ENCODE measurements at regions of chr17 and their contacts with region 1.

Region 1: DNA sequence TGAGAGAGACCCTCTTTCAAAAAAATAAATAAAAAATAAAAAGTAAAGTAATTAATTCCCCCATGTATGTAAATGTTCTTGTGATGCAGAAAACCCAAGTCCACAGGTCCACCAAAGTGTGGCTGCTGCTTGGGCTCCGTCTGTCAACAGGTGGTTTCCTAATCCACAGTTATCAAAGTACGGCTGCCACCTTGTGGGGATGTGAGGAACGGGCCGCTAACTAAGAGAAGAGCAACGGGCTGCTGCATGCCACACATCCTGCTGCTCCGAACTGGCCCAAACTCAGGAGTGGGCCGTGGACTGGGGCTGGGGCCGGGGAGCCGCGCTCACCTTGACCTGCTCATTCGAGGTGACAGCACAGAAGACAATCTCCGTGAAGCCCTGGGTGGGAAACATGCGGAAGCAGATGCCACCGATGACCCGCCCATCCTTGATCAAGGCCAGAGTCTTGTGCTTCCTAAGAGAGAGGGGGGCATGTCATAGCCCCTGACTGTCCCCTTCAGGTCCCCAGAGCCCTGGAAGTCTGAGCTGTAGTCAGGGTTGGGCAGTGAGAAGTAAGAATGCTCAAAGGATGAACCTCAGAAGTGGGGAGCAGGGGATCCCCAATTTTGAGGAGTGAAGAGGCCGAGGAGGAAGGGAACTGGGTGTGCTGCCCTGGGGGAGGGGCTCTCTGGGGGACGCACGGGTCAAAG is 4.3 kb downstream of the KAT2A start:
- DNase-seq: peak; percentile 80
- H3K4me3 ChIP-seq: no peak overlapping the region
- H3K27ac ChIP-seq: no peak overlapping the region
- H3K4me1 ChIP-seq: peaks cover 48% of the 10 kb centered on the region
- H3K27me3 ChIP-seq: no peaks in the 10 kb centered on the region
- CTCF ChIP-seq: peak; percentile 87

Region 2: DNA sequence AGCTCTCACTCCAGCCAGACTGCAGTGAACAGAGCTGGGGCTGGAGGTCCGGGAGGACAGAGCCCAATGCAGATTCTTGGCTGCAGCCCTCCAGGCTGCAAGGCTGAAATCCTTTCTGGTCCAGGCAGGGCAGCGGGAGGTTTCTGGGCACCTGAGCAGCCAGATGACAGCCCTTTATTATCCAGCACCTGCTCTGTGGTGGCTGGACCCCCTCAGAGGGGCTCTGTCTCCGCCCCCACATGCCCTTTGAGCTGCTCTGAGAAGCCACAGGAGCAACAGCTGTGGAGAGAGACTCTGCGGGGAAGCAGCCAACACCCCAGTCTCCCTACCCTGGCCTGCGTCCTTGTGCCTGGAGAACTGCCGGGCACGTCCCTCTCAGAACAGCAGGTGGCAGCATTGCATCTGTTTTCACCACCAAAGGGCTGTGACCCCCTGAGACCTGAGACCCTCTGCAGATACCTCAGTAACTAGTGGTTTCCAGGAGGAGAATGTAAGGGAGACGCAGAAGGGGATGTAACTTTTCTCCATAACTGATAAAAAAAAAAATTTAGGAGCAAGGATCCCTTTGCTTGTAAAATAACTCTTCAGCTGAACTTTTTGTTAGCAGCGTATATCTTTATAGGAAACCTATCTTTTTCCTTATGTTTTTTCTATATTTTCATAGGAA is 153.9 kb before region 1 on chr17:
- intact Hi-C with region 1: loop called (anchors 5 kb)
- DNase-seq: peak; percentile 79
- H3K4me3 ChIP-seq: no peak overlapping the region
- H3K27ac ChIP-seq: no peak overlapping the region
- H3K4me1 ChIP-seq: peaks cover 30% of the 10 kb centered on the region
- H3K27me3 ChIP-seq: no peaks in the 10 kb centered on the region
- CTCF ChIP-seq: peak; percentile 93

Region 3: DNA sequence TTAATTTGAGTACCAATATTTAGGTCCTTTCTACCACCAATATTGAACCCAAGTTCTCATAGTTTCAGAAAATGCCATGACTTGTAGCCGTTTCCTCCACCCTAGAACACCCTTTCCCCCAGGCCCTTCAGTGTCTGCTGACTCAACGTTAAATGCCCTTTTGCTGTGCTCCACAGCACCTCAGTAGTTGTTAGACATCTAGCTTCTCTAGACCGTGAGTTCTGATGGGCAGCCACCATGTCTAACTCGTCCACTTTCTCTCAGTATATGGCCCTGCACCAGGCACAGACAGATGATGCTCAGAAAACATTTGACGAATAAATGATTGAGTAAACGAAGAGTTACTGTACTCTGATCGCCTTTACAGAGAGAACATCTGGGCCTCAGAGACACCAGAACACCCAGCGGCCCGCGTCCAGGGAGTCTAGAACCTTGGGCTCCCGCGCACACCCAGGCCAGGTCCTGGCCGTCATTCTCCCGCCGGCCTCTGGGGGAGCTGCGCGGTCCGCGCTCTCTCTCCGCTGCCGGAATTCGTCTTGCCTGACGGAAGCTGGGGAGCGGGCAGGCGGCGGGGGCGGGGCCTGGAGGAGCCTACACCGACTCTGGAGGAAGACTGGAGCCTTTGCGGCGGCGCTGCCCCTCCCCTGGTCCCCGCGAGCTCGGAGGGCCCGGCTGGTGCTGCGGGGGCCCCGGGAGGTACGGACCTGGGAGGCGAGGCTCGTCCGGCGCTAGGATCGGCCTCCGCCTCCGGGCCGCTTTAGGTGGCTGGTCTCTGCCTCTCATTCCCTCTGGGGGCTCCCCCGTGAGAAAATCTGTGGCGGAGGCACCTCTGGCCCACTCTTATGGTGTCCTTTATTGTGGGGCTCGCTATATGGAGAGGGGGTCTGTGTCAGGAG is 97.1 kb before region 1 on chr17 and contains the start of gene NKIRAS2:
- intact Hi-C with region 1: loop called (anchors 5 kb)
- DNase-seq: peak; percentile 95
- H3K4me3 ChIP-seq: peak within 1 kb of the TSS; percentile 87
- H3K27ac ChIP-seq: peak within 1 kb of the TSS; percentile 88
- H3K4me1 ChIP-seq: peaks cover 74% of the 10 kb centered on the region
- H3K27me3 ChIP-seq: no peaks in the 10 kb centered on the region
- CTCF ChIP-seq: peak; percentile 98
- total RNA-seq, gene NKIRAS2: 50.9 TPM

Measured in left ventricle myocardium inferior (tissue), 1 donor.